ENCODE measurements at regions of chr1 and their contacts with region 1.

Region 1: GRCh38 chr1:62295921-62296491 is 23.2 kb downstream of the KANK4 start:
- DNase-seq: no peak

Region 2: GRCh38 chr1:62274496-62275485 is 21.2 kb before region 1 on chr1:
- intact Hi-C with region 1: loop called in 1 of 2 experiments (anchors 1 kb)
- DNase-seq: no peak

Region 3: GRCh38 chr1:62312698-62313097 is 16.7 kb after region 1 on chr1:
- intact Hi-C with region 1: loop called in 1 of 2 experiments (anchors 1 kb)
- DNase-seq: peak; percentile 35

Measured in posterior vena cava (tissue), 2 donors.